T-cell (primary cell): ENCODE measurements at regions of chr16 and their contacts with region 1.

Region 1: DNA sequence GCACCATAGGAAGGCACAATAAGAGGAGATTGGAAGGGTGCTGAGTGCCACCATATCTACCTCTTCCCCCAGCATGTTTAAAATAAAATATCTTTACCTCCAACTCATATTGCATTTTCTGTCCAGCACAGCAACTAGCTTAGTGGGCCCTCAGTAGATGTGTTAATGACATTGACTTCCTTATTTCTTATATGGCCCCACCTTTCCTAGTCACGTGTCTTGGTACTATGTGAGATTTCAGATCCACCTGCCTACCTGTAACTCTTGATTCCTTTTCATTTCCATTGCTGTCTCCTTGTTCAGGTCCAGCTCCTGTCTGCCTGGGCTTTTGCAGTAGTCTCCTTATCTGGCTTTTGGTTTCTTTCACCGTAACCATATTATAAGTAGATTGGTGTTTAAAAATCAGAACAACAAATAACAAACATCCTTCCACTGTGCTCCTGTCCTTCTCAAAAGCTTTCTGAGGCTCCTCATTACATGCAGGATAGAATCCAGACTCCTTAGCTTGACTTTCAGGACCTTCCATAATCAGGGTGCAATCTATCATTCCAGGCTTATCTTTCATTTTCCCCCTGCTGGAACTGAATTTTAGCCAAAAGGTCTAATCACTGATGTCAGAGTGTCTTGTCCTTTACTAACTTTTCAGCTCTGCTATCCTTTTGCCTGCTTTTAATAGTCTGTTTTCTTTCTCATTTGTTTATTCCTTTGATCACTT is 71.3 kb downstream of the FTO start:
- DNase-seq: no peak
- ATAC-seq: no peak
- H3K4me3 ChIP-seq: no peak overlapping the region
- H3K4me3 Mint-ChIP-seq: no peak overlapping the region
- H3K27ac ChIP-seq: no peak overlapping the region
- H3K27ac Mint-ChIP-seq: no peak overlapping the region
- H3K4me1 ChIP-seq: peaks cover 0 to 8% of the 10 kb centered on the region in 2 experiments
- H3K4me1 Mint-ChIP-seq: peaks cover 24 to 40% (median 39%) of the 10 kb centered on the region in 3 donors
- H3K27me3 ChIP-seq: no peaks in the 10 kb centered on the region
- H3K27me3 Mint-ChIP-seq: no peaks in the 10 kb centered on the region

Region 2: GRCh38 chr16:53743149-53743566 is 32.1 kb before region 1 on chr16:
- CTCF ChIA-PET with region 1: interaction called, 4 to 10 read pairs
- POLR2A ChIA-PET with region 1: no interaction called
- DNase-seq: peak in 9 of 35 experiments; percentile 0 to 37 (median 8)
- ATAC-seq: no peak
- H3K4me3 ChIP-seq: no peak overlapping the region
- H3K4me3 Mint-ChIP-seq: no peak overlapping the region
- H3K27ac ChIP-seq: no peak overlapping the region
- H3K27ac Mint-ChIP-seq: no peak overlapping the region
- H3K4me1 ChIP-seq: peaks cover 2 to 16% of the 10 kb centered on the region in 2 experiments
- H3K4me1 Mint-ChIP-seq: peaks cover 33 to 48% (median 47%) of the 10 kb centered on the region in 3 donors
- H3K27me3 ChIP-seq: no peaks in the 10 kb centered on the region
- H3K27me3 Mint-ChIP-seq: no peaks in the 10 kb centered on the region